HEK293 (cell line): ENCODE measurements at regions of chr6 and their contacts with region 1.

Region 1: DNA sequence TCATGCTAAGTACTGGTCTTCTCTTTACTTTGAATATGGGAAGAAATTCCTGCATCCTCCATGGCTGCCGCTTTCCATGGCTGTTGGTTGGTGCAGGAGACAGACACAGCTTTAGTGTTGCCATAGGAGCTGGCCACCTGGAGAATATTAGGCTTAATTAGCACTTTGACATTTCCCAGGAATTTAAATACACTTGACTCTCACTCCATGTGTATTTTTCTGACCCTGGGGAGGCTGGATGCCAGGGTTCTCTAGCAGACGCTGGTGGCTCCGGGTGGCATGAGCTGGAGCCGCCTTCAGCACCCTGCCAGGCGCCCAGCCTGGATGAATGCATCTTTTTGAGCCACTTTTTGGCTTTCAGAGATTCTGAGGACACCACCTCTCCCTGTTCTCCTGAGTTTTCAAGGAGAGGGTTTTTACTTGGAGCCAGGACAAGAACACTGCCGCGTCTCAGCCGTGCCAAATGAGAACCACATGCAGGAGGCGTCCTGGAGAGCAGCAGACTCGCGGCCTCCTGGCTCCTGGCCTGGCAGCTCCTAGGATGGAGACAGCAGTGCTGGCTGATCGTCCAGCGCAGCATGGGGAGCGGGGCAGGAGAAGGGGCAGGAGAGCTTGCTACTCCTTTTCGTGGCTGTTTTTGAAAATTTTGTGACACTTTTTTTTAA is 258.8 kb downstream of the SMOC2 start:
- H3K4me3 ChIP-seq: no peak overlapping the region
- H3K27ac ChIP-seq: no peak overlapping the region
- H3K4me1 ChIP-seq: no peaks in the 10 kb centered on the region
- CTCF ChIP-seq: no peak

Region 2: DNA sequence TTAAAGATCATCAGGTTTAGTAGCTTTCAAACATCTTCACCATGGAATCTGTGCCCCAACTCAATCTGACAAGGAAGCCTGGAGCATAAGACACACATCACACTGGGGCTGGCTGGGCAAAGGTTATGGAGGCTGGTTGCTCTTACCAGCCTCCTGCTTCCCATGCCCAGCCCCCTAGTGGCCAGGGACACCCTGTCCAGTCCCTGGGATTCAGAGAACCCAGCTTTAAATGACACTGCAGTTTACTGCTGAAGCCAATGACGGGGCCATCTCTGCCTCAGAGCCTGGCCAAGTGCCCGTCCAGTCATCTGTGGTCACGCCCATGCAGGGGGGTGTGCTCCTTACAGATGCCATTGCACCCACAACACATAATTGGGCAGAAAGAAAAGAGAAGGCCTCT is 14.1 kb after region 1 on chr6:
- CTCF ChIA-PET with region 1: interaction called, 13 read pairs
- POLR2A ChIA-PET with region 1: no interaction called
- H3K4me3 ChIP-seq: no peak overlapping the region
- H3K27ac ChIP-seq: no peak overlapping the region
- H3K4me1 ChIP-seq: no peaks in the 10 kb centered on the region
- CTCF ChIP-seq: no peak